ENCODE measurements at regions of chr10 and their contacts with region 1.

Region 1: DNA sequence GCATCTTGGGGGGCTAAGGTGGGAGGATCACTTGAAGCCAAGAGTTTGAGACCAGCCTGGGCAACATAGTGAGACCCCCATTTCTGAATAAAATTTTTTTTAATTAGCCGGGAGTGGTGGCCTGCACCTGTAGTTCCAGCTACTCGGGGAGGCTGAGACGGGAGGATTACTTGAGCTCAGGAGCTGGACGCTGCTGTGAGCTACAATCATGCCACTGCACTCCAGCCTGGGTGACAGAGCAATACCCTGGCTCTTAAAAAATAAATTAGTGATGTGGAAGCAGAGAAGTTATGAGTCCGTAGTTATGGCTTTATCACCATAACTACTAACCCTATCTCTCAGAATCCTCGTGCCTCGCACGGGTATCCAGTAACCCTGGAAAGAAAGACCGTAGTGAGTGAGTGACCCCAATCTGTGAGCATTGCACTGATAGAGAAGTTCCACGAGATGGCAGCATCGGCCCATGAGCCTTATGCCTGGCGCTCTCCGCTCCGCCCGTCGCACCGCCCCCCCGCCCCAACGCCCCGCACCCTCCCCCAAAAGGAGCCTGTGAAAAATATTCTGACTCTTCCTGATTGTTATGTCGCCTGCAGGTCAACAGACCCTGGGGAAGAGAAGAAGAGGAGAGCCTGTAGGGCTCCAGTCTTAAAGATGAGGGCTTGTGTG is 4.9 kb upstream of the SLC29A3 start:
- DNase-seq: peak; percentile 34 to 71 (median 63)
- H3K4me3 ChIP-seq: peak overlapping the region in 2 of 7 experiments; percentile 39 to 51
- H3K27ac ChIP-seq: no peak overlapping the region
- H3K4me1 ChIP-seq: peaks cover 3 to 31% (median 25%) of the 10 kb centered on the region in 4 experiments
- H3K27me3 ChIP-seq: peaks cover 0 to 1% (median 0%) of the 10 kb centered on the region in 5 experiments

Region 2: GRCh38 chr10:71302874-71303568 is 11.1 kb before region 1 on chr10:
- CTCF ChIA-PET with region 1: interaction called, 14 read pairs
- POLR2A ChIA-PET with region 1: interaction called, 3 read pairs
- DNase-seq: peak; percentile 78 to 86 (median 86)
- H3K4me3 ChIP-seq: no peak overlapping the region
- H3K27ac ChIP-seq: no peak overlapping the region
- H3K4me1 ChIP-seq: peaks cover 1 to 18% (median 12%) of the 10 kb centered on the region in 4 experiments
- H3K27me3 ChIP-seq: no peaks in the 10 kb centered on the region

Region 3: GRCh38 chr10:71378336-71379117 is 64.4 kb after region 1 on chr10:
- CTCF ChIA-PET with region 1: interaction called, 17 read pairs
- POLR2A ChIA-PET with region 1: no interaction called
- DNase-seq: peak; percentile 46 to 72 (median 62)
- H3K4me3 ChIP-seq: no peak overlapping the region
- H3K27ac ChIP-seq: peak overlapping the region in 1 of 2 experiments; percentile 31
- H3K4me1 ChIP-seq: peaks cover 9 to 43% (median 27%) of the 10 kb centered on the region in 4 experiments
- H3K27me3 ChIP-seq: no peaks in the 10 kb centered on the region

Region 4: DNA sequence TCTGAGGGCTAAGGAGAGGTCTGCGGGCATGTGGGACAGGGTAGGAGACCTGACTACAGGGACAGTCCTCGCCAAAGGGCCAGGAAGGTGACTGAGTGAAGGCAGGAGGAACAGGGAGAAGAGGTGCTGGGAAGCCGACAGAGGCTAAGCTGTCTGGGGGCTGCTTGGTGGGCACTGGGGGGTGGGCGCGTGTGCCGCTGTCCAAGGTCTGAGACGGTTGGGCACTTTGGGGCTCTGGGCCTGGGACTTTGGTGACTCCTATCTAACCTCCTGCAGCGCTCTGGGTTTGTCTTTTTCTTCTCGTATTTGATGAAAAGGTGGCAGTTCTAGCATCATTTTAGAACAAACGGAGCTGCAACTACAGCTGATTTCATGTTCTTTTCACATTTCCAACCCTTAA is 263.9 kb after region 1 on chr10:
- CTCF ChIA-PET with region 1: interaction called, 4 read pairs
- POLR2A ChIA-PET with region 1: interaction called, 12 read pairs
- DNase-seq: no peak
- H3K4me3 ChIP-seq: no peak overlapping the region
- H3K27ac ChIP-seq: no peak overlapping the region
- H3K4me1 ChIP-seq: no peaks in the 10 kb centered on the region
- H3K27me3 ChIP-seq: no peaks in the 10 kb centered on the region

Region 5: DNA sequence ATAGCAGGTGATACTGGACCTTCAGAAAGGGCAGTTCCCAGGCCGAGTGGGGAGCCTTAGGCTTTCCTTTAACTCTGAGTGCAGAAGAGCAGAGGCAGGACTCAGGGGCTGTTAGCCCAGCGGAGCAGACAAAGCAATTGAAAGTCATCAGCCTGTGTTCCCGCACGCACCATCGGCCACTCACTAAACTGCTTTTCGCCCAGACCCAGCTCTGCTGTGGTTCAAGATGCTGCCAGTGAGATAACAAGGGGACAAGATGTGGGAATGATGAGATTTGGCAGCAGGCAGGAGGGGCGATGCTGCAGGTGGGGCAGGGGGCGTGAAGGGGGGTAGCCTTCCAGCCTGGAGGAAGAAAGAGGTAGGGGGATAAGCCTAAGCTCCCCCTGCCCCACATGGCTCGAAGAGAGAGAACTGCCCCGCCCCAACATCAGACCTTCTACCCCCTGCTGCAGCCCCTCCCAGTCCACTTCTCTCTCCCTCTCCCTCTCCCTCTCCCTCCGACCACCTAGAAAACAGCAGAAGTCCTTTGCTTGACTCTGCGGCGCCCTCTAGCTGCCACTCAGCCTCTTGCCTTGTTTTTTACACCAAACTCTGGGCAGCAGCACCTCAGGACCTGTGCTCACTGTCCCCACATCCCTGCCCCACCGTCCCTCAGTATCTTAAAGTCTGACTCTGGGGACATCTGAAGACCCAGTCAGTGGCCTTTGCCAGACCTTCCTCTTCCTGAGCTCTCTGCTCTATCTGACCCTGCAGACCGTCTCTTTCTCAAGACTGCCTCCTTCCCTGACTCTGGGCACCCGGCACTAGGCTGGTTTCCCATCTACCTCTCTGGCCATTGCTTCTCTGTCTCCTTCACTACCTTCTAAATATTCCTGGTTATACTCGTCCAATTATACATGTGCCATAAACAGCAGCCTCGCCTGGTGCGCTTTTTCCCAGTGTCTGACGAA is 294.9 kb after region 1 on chr10:
- CTCF ChIA-PET with region 1: interaction called, 11 read pairs
- POLR2A ChIA-PET with region 1: no interaction called
- DNase-seq: peak; percentile 74 to 86 (median 82)
- H3K4me3 ChIP-seq: no peak overlapping the region
- H3K27ac ChIP-seq: no peak overlapping the region
- H3K4me1 ChIP-seq: peaks cover 0 to 9% (median 6%) of the 10 kb centered on the region in 4 experiments
- H3K27me3 ChIP-seq: no peaks in the 10 kb centered on the region

Region 6: GRCh38 chr10:71696628-71697326 is 382.6 kb after region 1 on chr10:
- CTCF ChIA-PET with region 1: interaction called, 37 read pairs
- POLR2A ChIA-PET with region 1: no interaction called
- DNase-seq: peak; percentile 37 to 69 (median 47)
- H3K4me3 ChIP-seq: no peak overlapping the region
- H3K27ac ChIP-seq: no peak overlapping the region
- H3K4me1 ChIP-seq: peaks cover 0 to 52% (median 24%) of the 10 kb centered on the region in 4 experiments
- H3K27me3 ChIP-seq: no peaks in the 10 kb centered on the region